HEK293 (cell line): ENCODE measurements at regions of chr11 and their contacts with region 1.

Region 1: DNA sequence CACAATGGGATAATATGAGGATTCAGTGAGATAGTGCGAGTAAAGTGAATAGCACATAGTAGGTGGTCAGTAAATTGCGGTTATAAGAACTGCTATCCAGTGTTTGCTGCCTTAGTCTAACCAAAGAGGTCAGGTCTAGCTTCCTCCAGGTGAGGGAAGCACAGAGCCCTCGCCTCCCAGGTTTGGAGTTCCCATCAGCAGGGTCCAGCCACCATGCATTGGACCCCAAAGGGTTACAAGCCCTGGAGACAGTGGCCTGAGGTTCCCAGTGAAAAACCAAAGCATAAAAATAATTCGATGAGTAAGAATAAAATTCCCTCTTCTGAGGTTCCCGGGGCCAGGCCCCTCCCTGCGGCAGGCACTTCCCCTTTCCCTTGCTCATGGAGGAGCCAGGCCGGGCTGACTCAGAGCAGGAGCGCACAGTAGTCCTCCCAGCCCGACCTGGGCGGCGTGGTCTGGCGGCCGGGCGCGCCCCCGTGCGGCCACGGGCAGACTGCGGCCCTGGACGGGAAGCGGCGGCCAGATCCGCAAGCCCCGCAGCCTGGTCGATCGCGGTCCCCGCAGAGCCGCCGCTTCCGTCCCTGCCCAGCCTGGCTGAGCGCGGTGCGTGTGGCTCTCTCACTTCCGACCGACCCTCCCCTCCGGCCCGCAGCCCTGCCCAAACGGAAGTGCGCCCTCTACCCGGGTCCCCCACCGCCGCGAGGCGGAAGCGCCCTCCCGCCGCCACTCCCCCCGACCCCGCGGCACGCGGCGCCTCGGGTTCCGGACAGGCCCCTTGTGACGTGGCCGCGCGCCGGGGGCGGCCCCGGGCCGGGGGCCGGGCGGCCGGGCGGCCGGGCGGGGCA is at the start of gene SLC39A13:
- H3K4me3 ChIP-seq: peak within 1 kb of the TSS; percentile 86
- H3K27ac ChIP-seq: peak within 1 kb of the TSS; percentile 82
- H3K4me1 ChIP-seq: no peaks in the 10 kb centered on the region
- CTCF ChIP-seq: peak; percentile 61; the same call in 1 of the 2 replicates

Region 2: GRCh38 chr11:47361419-47361818 is 46.5 kb before region 1 on chr11:
- CTCF ChIA-PET with region 1: no interaction called
- POLR2A ChIA-PET with region 1: no interaction called
- H3K4me3 ChIP-seq: no peak overlapping the region
- H3K27ac ChIP-seq: no peak overlapping the region
- H3K4me1 ChIP-seq: no peaks in the 10 kb centered on the region
- CTCF ChIP-seq: no peak

Region 3: GRCh38 chr11:47391077-47391583 is 16.8 kb before region 1 on chr11:
- CTCF ChIA-PET with region 1: interaction called, 10 read pairs
- POLR2A ChIA-PET with region 1: no interaction called
- H3K4me3 ChIP-seq: no peak overlapping the region
- H3K27ac ChIP-seq: no peak overlapping the region
- H3K4me1 ChIP-seq: no peaks in the 10 kb centered on the region
- CTCF ChIP-seq: no peak

Region 4: GRCh38 chr11:47616726-47617416 is 208.9 kb after region 1 on chr11:
- CTCF ChIA-PET with region 1: no interaction called
- POLR2A ChIA-PET with region 1: no interaction called
- H3K4me3 ChIP-seq: no peak overlapping the region
- H3K27ac ChIP-seq: no peak overlapping the region
- H3K4me1 ChIP-seq: no peaks in the 10 kb centered on the region
- CTCF ChIP-seq: peak; percentile 62; the same call in 1 of the 2 replicates